HCT116 (cell line): ENCODE measurements at regions of chr10 and their contacts with region 1.

Region 1: GRCh38 chr10:31928549-31929260 is at the start of gene ARHGAP12:
- DNase-seq: no peak
- ATAC-seq: peak; percentile 81
- H3K4me3 ChIP-seq: peak within 1 kb of the TSS; percentile 73 to 81
- H3K27ac ChIP-seq: peak within 1 kb of the TSS; percentile 98
- H3K4me1 ChIP-seq: peaks cover 52 to 80% of the 10 kb centered on the region in 2 experiments
- H3K27me3 ChIP-seq: no peaks in the 10 kb centered on the region
- CTCF ChIP-seq: no peak
- POLR2A ChIP-seq: peak; percentile 76
- RAD21 ChIP-seq: no peak
- total RNA-seq, gene ARHGAP12: 80.3 TPM

Region 2: DNA sequence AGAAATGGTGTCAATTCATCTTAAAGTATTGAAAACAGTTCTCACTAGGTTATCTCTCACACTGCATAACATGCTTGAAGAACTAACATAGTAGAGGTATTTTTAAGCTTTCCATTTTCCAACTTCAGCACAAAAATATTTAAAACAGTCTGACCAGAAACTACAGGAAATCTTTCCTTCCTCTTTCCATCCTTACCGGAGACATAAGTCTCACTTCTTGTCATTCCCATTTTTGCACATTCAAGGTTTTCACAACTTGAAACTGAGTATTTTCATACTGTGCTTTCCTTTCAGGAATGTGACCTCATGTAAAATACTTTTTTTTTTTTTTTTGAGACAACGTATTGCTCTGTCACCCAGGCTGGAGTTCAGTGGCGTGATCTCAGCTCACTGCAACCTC is 45.3 kb before region 1 on chr10:
- CTCF ChIA-PET with region 1: no interaction called
- POLR2A ChIA-PET with region 1: no interaction called
- RAD21 ChIA-PET with region 1: interaction called in 1 of 2 experiments, 6 read pairs
- intact Hi-C with region 1: loop called (anchors 5 kb)
- DNase-seq: no peak
- ATAC-seq: no peak
- H3K4me3 ChIP-seq: no peak overlapping the region
- H3K27ac ChIP-seq: peak overlapping the region; percentile 64; the same call in 1 of the 2 replicates
- H3K4me1 ChIP-seq: peaks cover 80 to 96% of the 10 kb centered on the region in 2 experiments
- H3K27me3 ChIP-seq: no peaks in the 10 kb centered on the region
- CTCF ChIP-seq: no peak
- POLR2A ChIP-seq: no peak
- RAD21 ChIP-seq: no peak

Region 3: GRCh38 chr10:31940839-31941653 is 12.3 kb after region 1 on chr10:
- CTCF ChIA-PET with region 1: interaction called, 3 read pairs
- POLR2A ChIA-PET with region 1: interaction called, 10 read pairs
- RAD21 ChIA-PET with region 1: interaction called in 1 of 2 experiments, 3 read pairs
- intact Hi-C with region 1: no loop called
- DNase-seq: peak; percentile 99
- ATAC-seq: peak; percentile 84
- H3K4me3 ChIP-seq: peak overlapping the region in 1 of 2 experiments; percentile 32; a peak in 2 of 4 replicates
- H3K27ac ChIP-seq: peak overlapping the region; percentile 95
- H3K4me1 ChIP-seq: peaks cover 86 to 97% of the 10 kb centered on the region in 2 experiments
- H3K27me3 ChIP-seq: no peaks in the 10 kb centered on the region
- CTCF ChIP-seq: no peak
- POLR2A ChIP-seq: no peak
- RAD21 ChIP-seq: no peak; the same call in 1 of the 2 replicates